Esophagus squamous epithelium (tissue), 5 donors: ENCODE measurements at regions of chr7 and their contacts with region 1.

Region 1: GRCh38 chr7:44595934-44596635 is 10.3 kb upstream of the OGDH start:
- DNase-seq: no peak
- H3K4me3 ChIP-seq: no peak overlapping the region
- H3K27ac ChIP-seq: no peak overlapping the region
- H3K4me1 ChIP-seq: no peaks in the 10 kb centered on the region
- H3K27me3 ChIP-seq: no peaks in the 10 kb centered on the region
- CTCF ChIP-seq: no peak
- POLR2A ChIP-seq: no peak

Region 2: GRCh38 chr7:44750921-44751571 is 155.0 kb after region 1 on chr7:
- intact Hi-C with region 1: loop called (anchors 10 kb)
- DNase-seq: no peak
- H3K4me3 ChIP-seq: no peak overlapping the region
- H3K27ac ChIP-seq: peak overlapping the region in 1 of 4 donors; percentile 6
- H3K4me1 ChIP-seq: peaks cover 31 to 72% (median 42%) of the 10 kb centered on the region in 3 donors
- H3K27me3 ChIP-seq: no peaks in the 10 kb centered on the region
- CTCF ChIP-seq: no peak
- POLR2A ChIP-seq: no peak

Region 3: DNA sequence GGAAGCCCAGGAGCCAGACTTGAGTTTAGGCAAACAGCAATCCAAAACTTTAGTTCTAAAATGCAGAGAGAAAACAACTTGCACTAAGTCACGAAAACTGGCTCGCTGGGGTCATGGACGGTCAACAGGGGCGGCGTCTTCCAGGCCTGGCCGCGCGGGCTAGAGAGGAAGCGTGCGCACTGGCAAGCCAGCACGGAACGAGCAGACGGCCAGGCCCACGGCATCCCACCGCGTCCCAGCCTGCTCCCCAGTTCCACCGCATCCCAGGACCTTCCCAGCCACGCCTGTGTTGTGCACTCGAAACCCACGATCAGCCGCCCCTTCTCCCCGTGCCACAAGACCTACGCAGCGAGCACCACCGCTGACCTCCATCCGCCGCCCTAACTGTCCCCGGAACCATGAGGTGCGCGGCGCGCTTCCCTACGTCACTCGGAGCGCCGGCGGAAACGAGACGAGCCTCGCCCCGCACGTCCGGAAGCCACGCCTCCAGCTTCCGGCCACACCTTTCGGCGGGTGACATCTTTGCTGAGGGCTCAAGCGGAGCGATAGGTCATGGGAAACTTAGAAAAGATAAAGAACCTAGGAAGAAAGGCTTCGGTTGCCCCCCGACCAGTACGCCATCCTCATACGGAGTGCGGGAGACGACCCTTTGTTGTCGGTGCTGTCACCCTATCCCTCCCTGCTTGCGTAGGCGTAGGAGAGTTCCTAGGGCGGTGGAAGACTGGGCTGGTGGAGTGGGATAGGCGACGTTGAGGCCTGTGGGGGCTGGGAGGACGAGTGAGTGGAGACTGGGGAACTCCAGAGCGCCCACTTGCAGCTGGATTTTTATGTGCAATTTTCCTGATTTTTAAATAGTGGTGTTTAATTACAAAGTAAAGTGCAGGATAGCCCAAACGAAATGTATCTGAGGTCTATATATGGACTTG is 515.5 kb after region 1 on chr7 and contains the start of gene TBRG4:
- intact Hi-C with region 1: no loop called
- DNase-seq: peak; percentile 73
- H3K4me3 ChIP-seq: peak within 1 kb of the TSS; percentile 44 to 98 (median 79)
- H3K27ac ChIP-seq: peak within 1 kb of the TSS; percentile 81 to 97 (median 93)
- H3K4me1 ChIP-seq: peaks cover 17 to 52% (median 18%) of the 10 kb centered on the region in 3 donors
- H3K27me3 ChIP-seq: no peaks in the 10 kb centered on the region
- CTCF ChIP-seq: peak in 3 of 6 experiments; percentile 19 to 25 (median 25)
- POLR2A ChIP-seq: peak in 3 of 4 donors; percentile 92 to 94 (median 93)
- total RNA-seq, gene TBRG4: 52.9 to 79.5 (median 65.4) TPM